Heart left ventricle (tissue), 16 donors: ENCODE measurements at regions of chr13 and their contacts with region 1.

Region 1: GRCh38 chr13:30617315-30618185 is at the start of gene USPL1:
- DNase-seq: peak; percentile 99
- ATAC-seq: peak; percentile 95 to 98 (median 96)
- H3K4me3 ChIP-seq: peak within 1 kb of the TSS; percentile 61 to 89 (median 84)
- H3K27ac ChIP-seq: peak within 1 kb of the TSS; percentile 98 to 100 (median 99)
- H3K4me1 ChIP-seq: peaks cover 0 to 42% (median 25%) of the 10 kb centered on the region in 12 donors
- H3K27me3 ChIP-seq: no peaks in the 10 kb centered on the region
- CTCF ChIP-seq: peak in 11 of 12 donors; percentile 14 to 48 (median 32)
- POLR2A ChIP-seq: peak; percentile 40 to 92
- total RNA-seq, gene USPL1: 9.0 to 14.3 (median 10.2) TPM

Region 2: DNA sequence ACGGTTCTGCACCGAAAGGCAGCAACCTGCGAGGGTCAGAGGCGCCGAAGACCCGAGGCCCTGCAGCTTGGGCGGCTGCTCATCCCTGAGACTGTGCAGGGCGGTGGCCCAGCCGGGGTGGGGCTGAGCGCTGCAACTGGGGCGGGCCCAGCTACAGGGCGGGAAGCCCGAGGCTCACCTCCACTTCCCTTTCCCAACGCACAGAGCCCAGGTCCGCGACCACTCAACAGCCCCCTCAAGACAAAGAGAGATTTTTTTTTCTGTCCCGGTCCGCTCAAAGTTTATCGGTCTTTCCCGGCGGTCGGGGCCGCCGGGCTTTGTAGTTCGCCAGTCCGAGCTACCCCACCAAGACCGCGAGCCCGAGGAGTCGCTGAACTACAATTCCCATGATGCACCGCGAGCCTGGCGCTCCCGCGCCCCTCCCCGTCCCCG is 310.8 kb before region 1 on chr13:
- intact Hi-C with region 1: loop called in 2 of 10 experiments (anchors 2 kb)
- DNase-seq: peak; percentile 95 to 96 (median 96)
- ATAC-seq: peak; percentile 93 to 97 (median 96)
- H3K4me3 ChIP-seq: peak overlapping the region; percentile 80 to 100 (median 96)
- H3K27ac ChIP-seq: peak overlapping the region; percentile 87 to 98 (median 96)
- H3K4me1 ChIP-seq: peaks cover 3 to 56% (median 28%) of the 10 kb centered on the region in 12 donors
- H3K27me3 ChIP-seq: no peaks in the 10 kb centered on the region
- CTCF ChIP-seq: no peak
- POLR2A ChIP-seq: no peak

Region 3: DNA sequence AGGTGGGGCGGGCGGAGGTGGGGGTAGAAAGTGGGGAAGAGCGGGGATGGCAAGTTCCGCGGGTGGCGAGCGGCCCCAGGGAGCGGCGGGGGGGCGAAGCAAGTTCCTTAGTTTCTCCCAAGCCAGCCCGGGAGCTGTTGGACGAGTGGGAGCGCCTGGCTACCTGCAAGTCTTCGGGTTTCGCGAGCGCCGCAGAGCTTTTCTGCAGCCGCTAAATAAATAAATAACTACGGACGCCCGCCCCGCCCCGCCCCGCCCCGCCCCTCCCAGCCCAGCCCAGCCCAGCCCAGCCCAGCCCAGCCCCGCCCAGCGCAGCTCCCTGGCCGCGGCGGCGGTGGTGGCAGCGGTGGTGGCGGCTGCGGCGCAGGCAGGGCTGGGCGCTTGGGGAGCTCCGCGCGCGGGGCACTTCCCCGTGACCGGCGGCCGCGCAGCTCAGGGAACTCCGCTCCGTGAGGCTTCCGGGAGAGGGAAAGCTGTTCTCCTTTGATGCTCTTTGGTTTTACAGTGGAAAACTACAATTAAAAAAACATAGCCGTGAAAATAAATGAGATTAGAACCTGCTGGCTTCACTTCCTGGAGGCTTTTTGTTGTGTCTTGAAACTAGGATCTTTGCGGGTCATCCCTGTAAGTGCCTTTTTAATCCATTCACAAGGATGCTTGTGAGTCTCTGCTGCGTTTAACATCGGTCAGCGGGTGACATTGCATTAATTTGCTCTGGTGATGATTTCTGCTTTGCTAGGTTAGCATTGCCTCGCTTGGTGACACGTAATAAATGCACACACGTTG is 195.3 kb before region 1 on chr13 and contains the start of gene UBE2L5:
- intact Hi-C with region 1: loop called in 2 of 10 experiments (anchors 2 kb)
- DNase-seq: peak; percentile 78 to 91 (median 84)
- ATAC-seq: peak; percentile 82 to 95 (median 90)
- H3K4me3 ChIP-seq: peak within 1 kb of the TSS; percentile 16 to 81 (median 67)
- H3K27ac ChIP-seq: peak within 1 kb of the TSS; percentile 80 to 98 (median 94)
- H3K4me1 ChIP-seq: peaks cover 0 to 18% (median 7%) of the 10 kb centered on the region in 12 donors
- H3K27me3 ChIP-seq: no peaks in the 10 kb centered on the region
- CTCF ChIP-seq: no peak
- POLR2A ChIP-seq: peak in 1 of 2 donors; percentile 51
- total RNA-seq, gene UBE2L5: 0.32 TPM in 1 of 9 donors, not detected in the others

Region 4: DNA sequence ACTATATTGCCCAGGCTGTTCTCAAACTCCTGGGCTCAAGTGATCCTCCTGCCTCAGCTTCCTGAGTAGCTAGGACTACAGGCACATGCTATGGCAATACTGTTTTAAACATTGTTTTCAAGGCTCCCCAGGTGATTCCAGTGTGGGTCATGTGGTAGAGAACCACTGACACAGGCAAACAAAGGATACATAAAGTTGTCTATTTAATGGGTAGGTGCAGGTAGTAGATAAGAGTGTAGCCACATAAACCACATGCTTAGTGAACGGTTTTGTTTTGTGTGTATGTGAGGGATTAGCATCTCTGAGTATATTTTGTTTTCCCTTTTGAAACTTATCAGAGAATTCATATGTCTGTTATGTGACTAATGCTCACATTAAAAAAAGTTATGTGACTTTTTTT is 36.9 kb after region 1 on chr13:
- intact Hi-C with region 1: no loop called
- DNase-seq: no peak
- ATAC-seq: no peak
- H3K4me3 ChIP-seq: no peak overlapping the region
- H3K27ac ChIP-seq: no peak overlapping the region
- H3K4me1 ChIP-seq: no peaks in the 10 kb centered on the region
- H3K27me3 ChIP-seq: no peaks in the 10 kb centered on the region
- CTCF ChIP-seq: no peak
- POLR2A ChIP-seq: no peak

Region 5: DNA sequence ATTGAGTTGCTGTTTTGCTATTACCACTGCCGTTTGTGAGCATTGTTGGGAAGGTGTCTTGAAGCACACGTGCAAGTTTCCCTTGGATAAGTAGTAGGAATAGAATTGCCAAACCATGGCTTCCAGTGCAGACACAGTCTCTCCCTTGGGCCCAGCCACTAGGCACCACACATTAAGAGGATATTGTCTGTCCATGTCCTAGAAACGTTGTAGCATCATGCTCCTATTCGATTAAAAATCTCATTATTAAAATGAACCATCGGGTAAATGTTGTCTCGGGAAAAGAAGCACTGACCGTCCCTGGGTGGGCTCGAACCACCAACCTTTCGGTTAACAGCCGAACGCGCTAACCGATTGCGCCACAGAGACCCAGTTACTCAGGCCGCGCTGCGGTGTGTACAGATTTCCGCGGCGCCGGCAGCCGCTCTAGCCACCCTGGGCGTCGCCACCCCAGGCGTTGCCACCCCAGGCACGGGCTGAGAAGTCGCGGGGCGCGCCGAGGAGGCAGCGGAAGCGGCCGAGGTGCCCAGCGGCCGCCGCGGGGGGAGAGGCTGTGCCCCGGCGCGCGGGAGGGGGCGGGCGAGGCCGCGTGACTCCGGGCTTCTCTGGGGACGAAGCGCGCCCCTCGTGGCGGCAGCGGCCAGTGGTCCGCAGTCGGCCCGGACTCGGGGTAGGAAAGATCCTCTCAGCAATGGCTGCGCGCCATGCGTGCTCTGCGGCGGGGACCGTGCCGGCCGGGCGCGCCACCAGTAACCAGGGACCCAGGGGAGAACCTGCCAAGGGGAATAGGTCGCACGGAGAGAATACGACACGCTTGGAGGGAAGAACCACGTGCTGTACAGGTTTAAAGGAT is 56.3 kb after region 1 on chr13:
- intact Hi-C with region 1: loop called in 3 of 10 experiments (anchors 1 to 5 kb)
- DNase-seq: peak; percentile 88 to 95 (median 91)
- ATAC-seq: peak; percentile 91 to 97 (median 95)
- H3K4me3 ChIP-seq: peak overlapping the region; percentile 30 to 80 (median 62)
- H3K27ac ChIP-seq: peak overlapping the region in 11 of 12 donors; percentile 64 to 86 (median 79)
- H3K4me1 ChIP-seq: peaks cover 0 to 12% (median 2%) of the 10 kb centered on the region in 12 donors
- H3K27me3 ChIP-seq: no peaks in the 10 kb centered on the region
- CTCF ChIP-seq: peak; percentile 48 to 96 (median 76)
- POLR2A ChIP-seq: peak in 1 of 2 donors; percentile 26

Region 6: DNA sequence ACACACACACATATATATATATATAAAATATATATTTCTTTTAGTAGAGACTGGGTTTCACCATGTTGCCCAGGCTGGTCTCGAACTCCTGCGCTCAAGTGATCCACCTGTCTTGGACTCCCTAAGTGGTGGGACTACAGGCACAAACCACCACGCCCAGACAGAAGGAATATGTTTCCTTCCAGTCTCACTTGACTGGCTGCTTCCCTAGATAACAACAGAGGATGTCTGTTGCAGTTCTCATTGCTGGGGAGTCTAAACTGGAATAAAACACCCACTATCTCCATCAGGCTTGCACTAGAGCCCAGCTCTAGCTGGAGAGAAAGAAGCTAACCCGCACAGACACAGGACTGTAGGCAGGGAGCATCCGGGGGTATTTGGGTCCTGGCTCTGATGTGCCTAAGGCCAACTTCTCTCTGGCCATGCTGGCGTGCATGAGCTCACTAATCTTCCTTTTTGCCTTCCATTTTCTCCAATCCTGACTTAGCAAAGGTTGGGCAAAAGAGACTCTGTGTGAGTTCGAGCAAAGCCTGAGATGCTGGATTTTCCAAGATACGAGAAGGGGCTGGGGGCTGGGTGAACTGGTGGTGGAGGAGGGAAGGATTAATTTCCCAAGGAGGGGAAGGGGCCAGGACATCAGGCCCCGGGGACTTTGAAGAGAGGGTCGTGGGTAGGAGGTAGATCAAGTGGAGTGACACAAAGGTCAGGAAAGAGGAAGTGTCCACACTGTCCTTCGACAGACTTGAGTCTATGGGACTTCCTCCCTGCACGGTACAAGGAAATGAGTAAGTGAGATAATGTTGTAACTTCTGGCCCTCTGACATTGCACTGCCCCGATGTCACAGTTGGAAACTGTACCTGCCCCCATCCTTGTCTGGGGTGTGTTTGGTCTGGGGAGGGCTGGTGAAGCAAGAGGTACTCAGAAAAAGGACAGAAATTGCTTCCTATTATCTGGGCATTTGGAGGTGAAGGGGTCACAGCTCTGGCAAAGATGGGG is 95.3 kb after region 1 on chr13:
- intact Hi-C with region 1: no loop called
- DNase-seq: peak in 2 of 5 donors; percentile 31 to 57
- ATAC-seq: peak; percentile 57 to 91 (median 88)
- H3K4me3 ChIP-seq: no peak overlapping the region
- H3K27ac ChIP-seq: peak overlapping the region in 1 of 12 donors; percentile 14
- H3K4me1 ChIP-seq: peaks cover 0 to 48% (median 8%) of the 10 kb centered on the region in 12 donors
- H3K27me3 ChIP-seq: no peaks in the 10 kb centered on the region
- CTCF ChIP-seq: no peak
- POLR2A ChIP-seq: no peak

Region 7: GRCh38 chr13:30752201-30752797 is 134.7 kb after region 1 on chr13:
- intact Hi-C with region 1: no loop called
- DNase-seq: peak in 4 of 5 donors; percentile 12 to 70 (median 66)
- ATAC-seq: peak; percentile 57 to 97 (median 92)
- H3K4me3 ChIP-seq: no peak overlapping the region
- H3K27ac ChIP-seq: peak overlapping the region in 10 of 12 donors; percentile 8 to 77 (median 36)
- H3K4me1 ChIP-seq: peaks cover 0 to 21% (median 10%) of the 10 kb centered on the region in 12 donors
- H3K27me3 ChIP-seq: peaks cover 0 to 5% (median 0%) of the 10 kb centered on the region in 9 donors
- CTCF ChIP-seq: no peak
- POLR2A ChIP-seq: no peak

Region 8: GRCh38 chr13:30818323-30818960 is 200.9 kb after region 1 on chr13:
- intact Hi-C with region 1: no loop called
- DNase-seq: peak in 1 of 5 donors; percentile 72
- ATAC-seq: peak in 1 of 4 donors; percentile 91
- H3K4me3 ChIP-seq: no peak overlapping the region
- H3K27ac ChIP-seq: no peak overlapping the region
- H3K4me1 ChIP-seq: peaks cover 0 to 9% (median 0%) of the 10 kb centered on the region in 12 donors
- H3K27me3 ChIP-seq: no peaks in the 10 kb centered on the region
- CTCF ChIP-seq: no peak
- POLR2A ChIP-seq: no peak

Region 9: DNA sequence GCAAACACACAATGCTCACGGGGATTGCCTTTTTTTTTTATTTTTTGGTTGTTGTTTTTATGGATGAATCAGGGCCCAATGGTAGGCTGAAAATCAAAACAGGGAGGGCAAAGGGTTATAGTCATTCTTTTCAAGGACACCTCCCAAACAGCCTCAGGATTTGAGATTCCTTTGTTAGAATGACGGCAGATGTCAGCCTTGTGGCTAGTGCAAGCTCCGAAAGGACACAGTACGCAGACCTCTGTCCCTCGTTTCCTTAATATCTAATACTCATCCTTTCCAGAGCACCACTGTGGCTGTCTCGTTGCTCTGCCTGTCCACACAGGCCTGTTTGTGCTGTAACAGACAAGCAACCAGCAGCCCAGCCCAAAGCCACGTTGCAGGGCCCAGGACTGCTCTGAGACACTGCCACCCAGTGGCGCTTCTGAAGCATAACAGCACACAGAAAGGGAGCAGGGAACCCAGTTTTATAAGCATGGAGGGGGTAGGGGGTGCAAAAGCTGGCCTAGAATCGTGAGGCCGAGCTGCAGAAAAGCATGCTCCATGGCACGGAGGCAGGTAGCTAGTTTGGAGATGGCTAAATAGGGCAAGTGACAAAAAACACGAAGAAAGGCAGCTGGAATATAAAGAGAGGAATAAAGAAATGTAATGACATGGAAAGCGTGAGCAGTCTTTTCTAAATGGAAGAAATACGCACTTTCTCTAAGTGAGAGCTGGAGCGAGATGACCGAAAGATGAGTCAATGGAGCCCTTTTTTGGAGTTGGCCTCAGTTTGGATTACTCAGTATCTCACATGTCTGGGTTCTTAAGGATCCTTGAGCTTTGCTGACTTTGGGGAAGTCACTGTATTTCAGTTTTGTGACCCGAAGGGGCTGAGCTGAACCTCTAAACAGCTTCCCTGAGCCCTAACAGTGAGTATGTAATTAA is 247.8 kb after region 1 on chr13:
- intact Hi-C with region 1: loop called in 1 of 10 experiments (anchors 5 kb)
- DNase-seq: peak; percentile 75 to 88 (median 82)
- ATAC-seq: peak; percentile 77 to 87 (median 80)
- H3K4me3 ChIP-seq: no peak overlapping the region
- H3K27ac ChIP-seq: peak overlapping the region; percentile 14 to 82 (median 64)
- H3K4me1 ChIP-seq: peaks cover 0 to 47% (median 17%) of the 10 kb centered on the region in 12 donors
- H3K27me3 ChIP-seq: no peaks in the 10 kb centered on the region
- CTCF ChIP-seq: peak; percentile 83 to 95 (median 90)
- POLR2A ChIP-seq: no peak